Right ventricle myocardium superior (tissue), 1 donor: ENCODE measurements at regions of chr3 and their contacts with region 1.

Region 1: DNA sequence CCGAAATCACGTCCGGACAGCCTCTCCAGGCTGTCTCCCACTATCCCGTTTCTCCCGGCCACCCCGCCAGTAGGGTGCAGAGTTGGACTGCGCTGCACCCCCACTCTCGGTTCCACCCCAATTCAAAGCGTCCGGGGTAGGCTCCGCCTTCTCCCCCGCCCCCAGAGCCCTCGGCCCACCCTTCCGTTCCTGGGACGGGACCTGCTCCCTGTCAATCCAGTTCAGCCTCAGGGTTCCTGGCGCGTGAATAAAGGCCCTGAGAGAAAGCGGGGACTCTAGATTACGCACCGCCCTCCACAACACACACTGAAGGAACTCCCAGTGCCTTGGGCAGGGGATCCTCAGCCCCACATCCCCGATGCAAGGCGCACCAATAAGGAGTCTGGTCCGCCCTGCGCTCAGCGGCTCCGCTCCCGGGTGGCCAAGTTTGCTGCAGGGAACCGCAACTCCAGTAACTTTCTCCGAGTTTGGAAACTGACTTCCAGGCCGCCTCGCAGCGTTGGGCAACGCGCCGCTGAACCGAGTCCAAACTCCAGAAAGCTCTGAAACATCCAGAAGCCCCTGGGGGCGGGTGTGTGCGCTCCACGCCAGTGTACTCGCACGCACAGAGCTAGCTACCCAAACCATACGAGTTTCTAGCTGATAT is 1.9 kb downstream of the ADAMTS9 start:
- DNase-seq: peak; percentile 93
- ATAC-seq: peak; percentile 90

Region 2: GRCh38 chr3:64903006-64903405 is 217.1 kb after region 1 on chr3:
- intact Hi-C with region 1: loop called (anchors 5 kb)
- DNase-seq: no peak
- ATAC-seq: no peak

Region 3: DNA sequence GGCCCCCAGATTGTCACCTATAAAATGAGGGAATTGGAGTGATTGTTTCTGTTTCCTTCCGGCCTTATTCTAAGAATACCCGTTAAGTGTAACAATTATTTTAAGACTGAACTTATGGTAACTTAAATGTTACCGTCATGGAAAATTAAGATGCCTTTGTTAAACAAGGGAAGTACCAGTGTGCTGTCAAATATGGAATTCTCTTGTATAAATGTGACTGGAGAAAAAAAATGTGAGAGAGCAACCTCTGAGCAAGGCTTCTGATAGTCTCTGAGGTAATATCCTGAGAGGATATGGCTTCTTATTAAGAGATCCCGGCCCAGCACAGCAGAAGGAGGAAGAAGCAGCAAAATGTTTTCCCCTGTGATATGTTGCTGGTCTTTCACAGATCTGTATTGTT is 482.6 kb after region 1 on chr3:
- intact Hi-C with region 1: loop called (anchors 5 kb)
- DNase-seq: no peak
- ATAC-seq: no peak